Ascending aorta (tissue), 2 donors: ENCODE measurements at regions of chr11 and their contacts with region 1.

Region 1: GRCh38 chr11:118659314-118659952 is 20.0 kb downstream of the TREH start:
- DNase-seq: peak; percentile 63 to 96
- H3K4me3 ChIP-seq: no peak overlapping the region
- H3K27ac ChIP-seq: peak overlapping the region; percentile 66 to 74
- H3K4me1 ChIP-seq: peaks cover 0 to 2% of the 10 kb centered on the region in 2 donors
- H3K27me3 ChIP-seq: no peaks in the 10 kb centered on the region
- CTCF ChIP-seq: peak; percentile 95 to 98 (median 98)

Region 2: DNA sequence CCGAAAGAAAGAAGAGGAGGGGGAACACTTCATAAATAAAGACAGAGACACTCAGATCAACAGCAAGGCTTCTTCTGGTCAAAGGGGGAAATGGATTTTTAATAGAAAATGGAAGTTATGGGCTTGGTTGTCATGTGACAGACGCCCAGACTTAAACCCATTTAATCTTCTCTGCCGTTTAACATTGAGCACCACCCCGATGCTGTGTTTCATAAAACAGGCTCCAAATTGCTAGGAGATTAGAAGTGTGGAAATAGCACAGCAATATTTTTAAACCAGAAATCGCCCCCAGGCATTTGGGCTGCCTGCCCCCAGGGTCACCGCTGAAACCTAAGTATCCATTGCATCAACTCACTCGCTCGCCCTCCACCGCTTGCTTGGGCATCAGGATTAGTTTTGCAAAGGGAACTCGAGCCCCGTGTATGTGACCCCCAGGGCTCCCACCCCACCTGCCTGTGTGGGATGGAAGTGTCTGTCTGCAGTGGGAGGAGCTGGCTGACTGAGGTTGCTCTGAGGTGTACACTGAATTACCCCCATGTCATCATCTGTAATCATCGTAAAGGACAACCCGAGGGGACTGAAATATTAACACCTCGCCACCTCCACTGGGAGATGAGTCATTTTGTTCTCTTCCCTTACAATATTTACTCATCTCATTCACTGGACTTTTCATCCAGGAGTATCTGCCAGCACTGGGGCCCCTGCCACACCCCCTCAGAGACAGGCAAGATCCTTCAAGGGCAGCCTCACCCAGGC is 873.1 kb before region 1 on chr11:
- intact Hi-C with region 1: no loop called
- DNase-seq: no peak
- H3K4me3 ChIP-seq: no peak overlapping the region
- H3K27ac ChIP-seq: no peak overlapping the region
- H3K4me1 ChIP-seq: no peaks in the 10 kb centered on the region
- H3K27me3 ChIP-seq: no peaks in the 10 kb centered on the region
- CTCF ChIP-seq: no peak

Region 3: DNA sequence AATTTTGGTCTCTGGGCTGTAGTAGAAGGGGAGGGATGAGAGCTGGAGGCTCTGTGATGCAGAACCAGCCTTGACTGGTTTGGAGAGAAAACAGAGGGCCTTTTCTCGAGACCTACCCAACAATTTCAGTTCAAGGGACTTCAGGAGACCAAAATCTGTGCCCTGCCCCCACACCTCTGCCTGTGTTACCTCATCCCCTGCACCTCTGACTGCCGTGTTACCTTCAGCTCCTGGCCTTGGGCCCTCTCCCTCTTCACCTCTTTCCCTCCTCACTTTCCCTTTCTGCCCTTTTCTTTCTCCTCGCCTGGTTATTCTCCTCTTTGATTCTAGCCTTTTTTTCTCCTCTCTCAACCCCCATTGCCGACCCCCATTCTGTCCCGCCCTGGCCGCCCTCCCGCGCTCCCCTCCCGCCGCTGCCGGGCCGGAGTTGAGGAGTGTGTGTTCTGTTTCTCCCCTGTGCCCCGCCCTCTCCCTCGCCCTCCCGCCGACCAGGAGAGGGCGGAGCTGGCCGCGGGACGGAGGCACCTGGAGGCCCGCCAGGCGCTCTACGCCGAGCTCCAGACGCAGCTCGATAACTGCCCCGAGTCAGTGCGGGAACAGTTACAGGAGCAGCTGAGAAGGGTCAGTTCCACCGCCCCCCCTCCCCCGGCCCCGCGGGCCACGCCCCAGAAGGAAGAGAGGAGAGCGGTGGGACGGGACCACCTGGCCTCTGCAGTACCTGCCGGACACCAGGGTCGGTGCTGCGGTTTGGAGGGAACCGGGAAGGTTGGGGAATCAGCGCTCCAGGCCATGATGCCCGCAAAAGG is 24.8 kb before region 1 on chr11:
- intact Hi-C with region 1: loop called (anchors 1 kb)
- DNase-seq: peak in 1 of 2 donors; percentile 89
- H3K4me3 ChIP-seq: peak overlapping the region; percentile 43 to 54
- H3K27ac ChIP-seq: peak overlapping the region; percentile 74 to 86
- H3K4me1 ChIP-seq: peaks cover 22 to 28% of the 10 kb centered on the region in 2 donors
- H3K27me3 ChIP-seq: no peaks in the 10 kb centered on the region
- CTCF ChIP-seq: peak; percentile 5 to 39 (median 39)

Region 4: GRCh38 chr11:118956094-118956846 is 296.8 kb after region 1 on chr11 and contains the start of gene UPK2:
- intact Hi-C with region 1: loop called (anchors 1 kb)
- DNase-seq: peak; percentile 49 to 93
- H3K4me3 ChIP-seq: no peak within 1 kb of the TSS
- H3K27ac ChIP-seq: no peak within 1 kb of the TSS
- H3K4me1 ChIP-seq: no peaks in the 10 kb centered on the region
- H3K27me3 ChIP-seq: no peaks in the 10 kb centered on the region
- CTCF ChIP-seq: peak; percentile 91 to 98 (median 91)
- total RNA-seq, gene UPK2: not detected